GM10248 (cell line): ENCODE measurements at regions of chr10 and their contacts with region 1.

Region 1: GRCh38 chr10:23158370-23158769 is 33.7 kb upstream of the PTF1A start:
- DNase-seq: peak; percentile 79
- CTCF ChIP-seq: peak; percentile 79

Region 2: DNA sequence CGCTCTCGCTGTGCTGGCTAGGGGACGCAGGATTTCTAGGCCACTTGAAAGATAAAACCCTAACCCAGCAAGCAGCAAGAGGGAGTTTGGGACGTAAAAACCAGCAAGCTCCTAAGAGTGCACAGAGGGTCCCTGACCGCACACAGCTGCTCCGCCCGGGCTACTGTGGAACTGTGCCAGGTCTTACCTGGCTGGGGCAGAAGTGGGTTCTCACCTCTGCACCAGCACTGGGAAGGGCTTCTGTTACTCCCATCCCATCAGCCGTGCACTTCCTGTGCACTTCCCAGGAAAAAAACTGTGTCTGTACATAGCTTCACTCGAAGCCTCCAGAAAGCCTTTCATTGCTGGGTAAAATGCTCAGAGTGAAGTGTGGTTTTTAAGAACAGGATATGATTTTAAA is 12.1 kb before region 1 on chr10:
- CTCF ChIA-PET with region 1: interaction called, 13 read pairs
- POLR2A ChIA-PET with region 1: no interaction called
- DNase-seq: no peak
- CTCF ChIP-seq: no peak

Region 3: DNA sequence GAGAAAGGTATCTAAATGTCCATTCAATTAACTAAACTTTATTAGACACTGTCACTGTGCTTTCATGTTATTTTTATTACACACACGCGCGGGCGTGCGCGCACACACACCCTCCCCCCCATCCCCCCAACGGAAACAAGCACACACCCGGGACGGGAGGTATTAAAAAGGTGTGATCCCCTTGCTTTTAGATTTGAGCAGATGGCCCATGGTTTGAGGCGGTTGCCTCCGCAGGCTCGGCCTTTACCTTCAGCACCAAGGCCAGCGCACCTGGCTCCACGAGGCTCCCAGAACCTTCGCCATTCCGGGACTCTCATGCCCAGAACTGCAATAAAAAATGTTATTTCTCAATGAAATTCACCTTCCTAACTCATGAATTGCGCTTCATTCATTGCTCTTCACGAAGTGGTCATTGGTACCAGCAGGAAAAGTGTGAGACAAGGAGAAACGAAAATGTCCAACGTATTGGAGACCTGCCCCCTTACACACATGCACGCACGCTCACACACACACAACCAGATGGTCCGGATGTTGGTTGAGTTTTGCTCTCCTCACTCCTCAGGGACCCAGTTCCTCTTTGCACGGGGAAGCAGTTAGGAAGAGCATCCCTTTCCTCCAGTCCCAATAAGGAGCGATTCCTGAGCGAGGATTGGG is 13.0 kb after region 1 on chr10:
- CTCF ChIA-PET with region 1: interaction called, 22 read pairs
- POLR2A ChIA-PET with region 1: no interaction called
- DNase-seq: no peak
- CTCF ChIP-seq: no peak

Region 4: GRCh38 chr10:23293145-23293724 is 134.9 kb after region 1 on chr10:
- CTCF ChIA-PET with region 1: interaction called, 65 read pairs
- POLR2A ChIA-PET with region 1: no interaction called
- DNase-seq: peak; percentile 45
- CTCF ChIP-seq: peak; percentile 64

Region 5: GRCh38 chr10:24518981-24519597 is 1360.7 kb after region 1 on chr10:
- CTCF ChIA-PET with region 1: interaction called, 12 read pairs
- POLR2A ChIA-PET with region 1: no interaction called
- DNase-seq: peak; percentile 54
- CTCF ChIP-seq: peak; percentile 68

Region 6: DNA sequence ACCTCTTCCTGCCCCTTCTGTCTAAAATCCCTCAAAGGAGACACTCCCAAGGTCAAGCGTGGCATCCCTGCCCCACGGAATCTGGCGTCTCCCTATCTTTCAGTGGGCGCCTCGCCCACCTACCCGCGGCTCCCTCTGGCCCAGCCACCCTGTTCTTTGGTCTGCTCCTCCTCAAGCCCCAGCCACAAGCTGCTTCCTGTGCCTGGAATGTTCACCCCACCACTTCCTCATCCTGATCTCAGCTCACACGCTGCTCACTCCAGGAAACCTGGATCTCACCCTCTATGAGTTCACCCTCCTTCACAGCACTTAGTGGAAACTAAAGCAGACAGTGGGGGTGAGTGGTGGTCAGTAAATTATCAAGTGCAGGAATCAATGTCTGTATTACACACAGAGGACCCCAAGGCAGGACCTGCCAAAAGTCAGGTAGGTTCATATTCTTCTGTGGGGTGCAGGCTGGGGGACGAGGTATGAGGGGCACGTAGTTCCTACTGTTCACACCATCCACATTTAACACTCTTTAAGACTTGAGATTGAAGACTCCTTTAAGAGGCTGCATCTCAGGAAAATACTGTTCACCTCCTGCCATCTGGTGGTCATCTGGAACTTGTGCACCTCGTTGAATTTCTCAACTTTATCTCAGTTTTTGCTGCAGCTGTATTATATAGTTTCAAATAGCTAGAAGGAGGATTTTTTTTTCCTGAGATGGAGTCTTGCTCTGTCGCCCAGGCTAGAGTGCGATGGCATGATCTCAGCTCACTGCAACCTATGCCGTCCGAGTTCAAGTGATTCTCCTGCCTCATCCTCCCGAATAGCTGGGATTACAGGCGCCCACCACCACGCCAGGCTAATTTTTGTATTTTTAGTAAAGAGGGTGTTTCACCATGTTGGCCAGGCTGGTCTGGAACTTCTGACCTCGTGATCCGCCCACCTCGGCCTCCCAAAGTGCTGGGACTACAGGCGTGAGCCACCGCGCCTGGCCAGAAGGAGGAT is 1398.7 kb after region 1 on chr10:
- CTCF ChIA-PET with region 1: interaction called, 10 read pairs
- POLR2A ChIA-PET with region 1: no interaction called
- DNase-seq: peak; percentile 68
- CTCF ChIP-seq: peak; percentile 73

Region 7: DNA sequence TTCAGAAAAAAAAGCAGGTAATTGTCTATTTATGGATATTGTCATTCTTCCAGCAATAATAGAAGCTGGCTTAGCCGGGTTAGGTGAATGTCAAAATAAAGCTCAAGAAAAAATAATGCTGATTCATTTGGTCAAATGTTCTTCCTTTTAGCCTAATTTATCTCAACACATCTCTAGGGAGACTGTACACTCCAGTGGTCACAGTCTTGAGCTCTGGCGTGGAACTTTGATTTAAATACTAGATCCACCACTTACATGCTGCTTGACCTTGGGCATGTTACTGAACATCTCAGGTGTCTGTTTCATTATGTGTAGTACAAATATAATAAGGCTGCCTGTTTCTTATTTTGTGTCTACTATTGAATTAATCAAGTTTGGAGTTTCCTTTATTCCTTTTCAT is 1772.1 kb after region 1 on chr10:
- CTCF ChIA-PET with region 1: no interaction called
- POLR2A ChIA-PET with region 1: no interaction called
- DNase-seq: no peak
- CTCF ChIP-seq: no peak